ENCODE measurements at regions of chr1 and their contacts with region 1.

Region 1: GRCh38 chr1:9413148-9413876 is 120.6 kb downstream of the SPSB1 start:
- DNase-seq: peak in 11 of 14 experiments; percentile 19 to 72 (median 42)
- ATAC-seq: peak; percentile 64
- H3K4me3 ChIP-seq: peak overlapping the region; percentile 28
- H3K4me3 Mint-ChIP-seq: peak overlapping the region; percentile 23
- H3K27ac ChIP-seq: no peak overlapping the region
- H3K27ac Mint-ChIP-seq: no peak overlapping the region
- H3K4me1 ChIP-seq: peaks cover 55% of the 10 kb centered on the region
- H3K4me1 Mint-ChIP-seq: peaks cover 62% of the 10 kb centered on the region
- H3K27me3 ChIP-seq: no peaks in the 10 kb centered on the region
- H3K27me3 Mint-ChIP-seq: no peaks in the 10 kb centered on the region
- CTCF ChIP-seq: no peak

Region 2: DNA sequence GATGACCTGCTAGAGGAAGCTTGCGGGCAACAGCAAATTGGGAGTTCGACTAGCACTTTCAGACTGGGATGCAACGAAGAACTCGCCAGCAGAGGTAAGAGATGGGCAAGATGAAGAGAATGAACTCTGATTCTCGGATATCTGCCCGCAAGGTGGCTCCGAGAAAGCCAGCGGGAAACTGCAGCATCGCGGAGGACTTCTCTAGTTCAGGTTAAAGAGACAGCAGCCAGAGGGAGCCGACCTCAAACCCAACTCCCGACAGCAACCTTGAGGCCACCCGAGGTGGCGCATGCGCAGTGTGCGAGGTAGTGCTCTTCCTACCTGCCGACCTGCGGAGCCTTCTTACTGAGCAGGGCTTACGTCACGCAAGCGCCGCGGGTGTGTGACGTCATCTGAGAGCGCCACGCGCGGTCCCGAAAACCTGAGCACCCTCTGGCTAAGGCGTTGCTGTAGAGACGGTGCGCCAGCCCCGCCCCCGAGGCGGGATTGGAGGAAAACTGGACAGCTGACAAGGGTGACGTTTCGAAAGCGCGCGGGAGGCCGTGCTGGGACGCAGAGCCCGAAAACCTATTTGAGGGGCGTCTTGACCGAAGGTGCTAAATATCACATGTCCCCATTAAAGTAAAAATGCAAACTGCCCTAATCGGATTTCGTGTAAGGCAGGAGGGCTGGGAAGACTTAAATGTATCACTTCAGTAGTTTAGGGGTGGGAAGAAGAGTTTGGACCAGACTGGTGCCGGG is 15.5 kb after region 1 on chr1:
- CTCF ChIA-PET with region 1: no interaction called
- POLR2A ChIA-PET with region 1: interaction called, 4 read pairs
- intact Hi-C with region 1: loop called in 1 of 2 experiments (anchors 1 kb)
- DNase-seq: peak; percentile 99 to 100 (median 100)
- ATAC-seq: peak; percentile 72
- H3K4me3 ChIP-seq: peak overlapping the region; percentile 66
- H3K4me3 Mint-ChIP-seq: peak overlapping the region; percentile 91
- H3K27ac ChIP-seq: peak overlapping the region; percentile 72 to 82
- H3K27ac Mint-ChIP-seq: peak overlapping the region; percentile 92
- H3K4me1 ChIP-seq: peaks cover 55% of the 10 kb centered on the region
- H3K4me1 Mint-ChIP-seq: peaks cover 56% of the 10 kb centered on the region
- H3K27me3 ChIP-seq: no peaks in the 10 kb centered on the region
- H3K27me3 Mint-ChIP-seq: no peaks in the 10 kb centered on the region
- CTCF ChIP-seq: no peak